Ascending aorta (tissue), 2 donors: ENCODE measurements at regions of chr11 and their contacts with region 1.

Region 1: GRCh38 chr11:90453525-90453924 is 230.7 kb upstream of the CHORDC1 start:
- DNase-seq: no peak
- H3K4me3 ChIP-seq: no peak overlapping the region
- H3K27ac ChIP-seq: peak overlapping the region in 1 of 2 donors; percentile 28
- H3K4me1 ChIP-seq: peaks cover 0 to 4% of the 10 kb centered on the region in 2 donors
- H3K27me3 ChIP-seq: no peaks in the 10 kb centered on the region
- CTCF ChIP-seq: no peak

Region 2: GRCh38 chr11:90288212-90288821 is 165.2 kb before region 1 on chr11:
- intact Hi-C with region 1: loop called (anchors 2 kb)
- DNase-seq: no peak
- H3K4me3 ChIP-seq: no peak overlapping the region
- H3K27ac ChIP-seq: no peak overlapping the region
- H3K4me1 ChIP-seq: no peaks in the 10 kb centered on the region
- H3K27me3 ChIP-seq: no peaks in the 10 kb centered on the region
- CTCF ChIP-seq: peak; percentile 46 to 76 (median 51)